Spleen (tissue), 13 donors: ENCODE measurements at regions of chrX and their contacts with region 1.

Region 1: GRCh38 chrX:57119416-57119815 is 1.9 kb downstream of the SPIN2B start:
- DNase-seq: no peak
- H3K4me3 ChIP-seq: no peak overlapping the region
- H3K27ac ChIP-seq: no peak overlapping the region
- H3K4me1 ChIP-seq: peaks cover 0 to 10% (median 4%) of the 10 kb centered on the region in 6 donors
- H3K27me3 ChIP-seq: no peaks in the 10 kb centered on the region
- CTCF ChIP-seq: no peak
- POLR2A ChIP-seq: no peak

Region 2: GRCh38 chrX:56928546-56928945 is 190.9 kb before region 1 on chrX:
- intact Hi-C with region 1: no loop called
- DNase-seq: no peak
- H3K4me3 ChIP-seq: no peak overlapping the region
- H3K27ac ChIP-seq: no peak overlapping the region
- H3K4me1 ChIP-seq: no peaks in the 10 kb centered on the region
- H3K27me3 ChIP-seq: peaks cover 0 to 16% (median 0%) of the 10 kb centered on the region in 7 donors
- CTCF ChIP-seq: no peak
- POLR2A ChIP-seq: no peak

Region 3: DNA sequence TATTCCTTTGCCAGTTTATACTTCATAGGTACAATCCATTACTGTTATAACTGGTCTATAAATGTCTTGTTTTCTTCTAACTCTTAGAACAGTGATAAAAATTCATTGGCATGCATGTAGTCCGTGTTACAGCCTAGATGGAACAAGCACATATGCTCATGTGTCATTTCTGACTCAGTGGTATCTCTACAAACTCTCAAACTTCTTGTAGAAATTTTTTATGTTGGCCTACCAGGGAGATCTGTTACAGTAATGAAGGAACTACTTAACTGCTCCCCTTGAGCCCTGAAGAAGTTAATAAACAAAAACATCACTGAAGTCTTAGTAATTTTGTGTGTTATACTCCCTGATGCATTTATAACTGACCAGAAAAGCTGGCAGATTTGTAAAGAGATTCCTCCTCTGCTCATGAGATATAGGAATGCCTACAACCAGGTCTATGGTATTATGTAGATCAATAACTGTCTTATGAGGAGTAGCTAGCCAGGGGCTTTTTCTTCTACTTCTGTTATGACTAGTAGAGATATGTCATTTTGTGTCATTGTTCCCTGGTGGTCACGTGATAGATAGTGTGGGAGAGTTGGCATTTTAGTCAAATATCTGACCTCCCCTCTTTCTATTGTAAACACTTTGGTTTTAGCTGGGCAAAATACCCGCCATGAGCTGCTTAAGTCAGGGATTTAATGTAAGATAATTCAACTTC is 113.4 kb after region 1 on chrX:
- intact Hi-C with region 1: no loop called
- DNase-seq: no peak
- H3K4me3 ChIP-seq: no peak overlapping the region
- H3K27ac ChIP-seq: no peak overlapping the region
- H3K4me1 ChIP-seq: no peaks in the 10 kb centered on the region
- H3K27me3 ChIP-seq: no peaks in the 10 kb centered on the region
- CTCF ChIP-seq: no peak
- POLR2A ChIP-seq: no peak

Region 4: GRCh38 chrX:57286507-57287251 is 167.3 kb after region 1 on chrX and contains the start of gene FAAH2:
- intact Hi-C with region 1: no loop called
- DNase-seq: peak; percentile 66
- H3K4me3 ChIP-seq: peak within 1 kb of the TSS in 5 of 8 donors; percentile 10 to 62 (median 27)
- H3K27ac ChIP-seq: peak within 1 kb of the TSS in 4 of 8 donors; percentile 38 to 70 (median 46)
- H3K4me1 ChIP-seq: no peaks in the 10 kb centered on the region
- H3K27me3 ChIP-seq: peaks cover 0 to 4% (median 0%) of the 10 kb centered on the region in 7 donors
- CTCF ChIP-seq: no peak
- POLR2A ChIP-seq: no peak
- total RNA-seq, gene FAAH2: 1.8 to 5.8 (median 3.3) TPM

Region 5: DNA sequence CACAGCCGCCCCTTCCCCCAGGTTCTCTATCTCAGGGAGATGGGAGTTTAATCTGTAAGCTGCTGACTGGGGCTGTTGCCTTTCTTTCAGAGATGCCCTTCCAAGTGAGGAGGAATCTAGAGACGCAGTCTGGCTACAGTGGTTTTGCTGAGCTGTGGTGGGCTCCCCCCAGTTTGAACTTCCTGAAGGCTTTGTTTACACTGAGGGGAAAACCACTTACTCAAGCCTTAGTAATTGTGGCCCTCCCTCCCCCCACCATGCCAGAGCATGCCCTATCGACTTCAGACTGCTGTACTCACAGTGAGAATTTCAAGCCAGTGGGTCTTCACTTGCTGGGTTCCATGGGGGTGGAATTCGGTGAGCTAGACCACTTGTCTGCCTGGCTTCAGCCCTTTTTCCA is 298.4 kb after region 1 on chrX:
- intact Hi-C with region 1: no loop called
- DNase-seq: no peak
- H3K4me3 ChIP-seq: no peak overlapping the region
- H3K27ac ChIP-seq: no peak overlapping the region
- H3K4me1 ChIP-seq: no peaks in the 10 kb centered on the region
- H3K27me3 ChIP-seq: peaks cover 0 to 2% (median 0%) of the 10 kb centered on the region in 7 donors
- CTCF ChIP-seq: no peak
- POLR2A ChIP-seq: no peak

Region 6: GRCh38 chrX:57918750-57919436 is 799.5 kb after region 1 on chrX:
- intact Hi-C with region 1: loop called (anchors 10 kb)
- DNase-seq: no peak
- H3K4me3 ChIP-seq: no peak overlapping the region
- H3K27ac ChIP-seq: no peak overlapping the region
- H3K4me1 ChIP-seq: no peaks in the 10 kb centered on the region
- H3K27me3 ChIP-seq: peaks cover 0 to 6% (median 0%) of the 10 kb centered on the region in 7 donors
- CTCF ChIP-seq: peak in 8 of 11 experiments; percentile 17 to 61 (median 50)
- POLR2A ChIP-seq: no peak